Aorta (tissue), 5 donors: ENCODE measurements at regions of chrX and their contacts with region 1.

Region 1: GRCh38 chrX:154918060-154918483 is 31.9 kb downstream of the F8A1 start:
- DNase-seq: peak in 1 of 2 donors; percentile 56
- ATAC-seq: peak; percentile 56
- H3K4me3 ChIP-seq: no peak overlapping the region
- H3K27ac ChIP-seq: no peak overlapping the region
- H3K4me1 ChIP-seq: no peaks in the 10 kb centered on the region
- H3K27me3 ChIP-seq: no peaks in the 10 kb centered on the region

Region 2: DNA sequence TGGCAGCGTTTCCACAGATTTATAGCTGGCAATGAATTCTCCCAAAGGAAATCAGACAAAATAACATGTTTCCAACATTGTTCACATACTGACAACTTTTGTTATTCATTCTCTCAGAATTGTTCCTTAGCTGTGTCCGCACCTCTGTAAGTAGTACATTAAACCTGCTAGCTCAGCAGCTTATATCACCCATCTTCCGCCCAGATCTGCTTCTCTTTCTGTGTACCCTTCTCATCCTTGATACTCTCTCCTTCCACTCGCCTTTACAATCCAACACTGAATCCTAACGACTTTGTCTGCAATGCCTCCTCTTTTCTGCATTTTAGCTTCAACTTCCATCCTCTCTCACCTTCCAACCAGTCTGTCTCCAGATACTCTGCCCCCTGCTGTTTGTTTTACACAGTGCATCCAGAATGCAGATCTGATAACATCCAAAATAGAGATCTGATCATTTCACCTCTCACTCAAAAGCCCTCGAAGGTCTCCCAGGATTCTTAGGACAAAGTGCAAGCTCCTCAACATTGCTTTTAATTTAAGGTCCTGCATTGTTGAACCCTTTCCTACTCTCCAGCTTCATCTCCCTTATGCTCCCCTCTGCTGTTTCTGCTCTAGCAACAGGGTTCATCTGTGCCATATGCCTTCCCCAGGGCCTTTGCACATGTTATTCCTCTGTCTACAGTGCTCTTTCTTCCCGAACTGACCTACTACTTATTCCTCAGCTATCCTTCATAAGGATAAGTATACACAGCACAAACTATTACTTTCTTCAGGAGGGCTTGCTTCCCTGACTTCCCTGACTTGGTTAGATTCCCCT is 230.9 kb after region 1 on chrX:
- intact Hi-C with region 1: loop called in 1 of 2 experiments (anchors 5 kb)
- DNase-seq: no peak
- ATAC-seq: no peak
- H3K4me3 ChIP-seq: no peak overlapping the region
- H3K27ac ChIP-seq: no peak overlapping the region
- H3K4me1 ChIP-seq: no peaks in the 10 kb centered on the region
- H3K27me3 ChIP-seq: no peaks in the 10 kb centered on the region